Heart left ventricle (tissue), 16 donors: ENCODE measurements at regions of chr12 and their contacts with region 1.

Region 1: GRCh38 chr12:68137335-68137830 is 22.2 kb downstream of the IFNG start:
- DNase-seq: no peak
- ATAC-seq: no peak
- H3K4me3 ChIP-seq: no peak overlapping the region
- H3K27ac ChIP-seq: no peak overlapping the region
- H3K4me1 ChIP-seq: no peaks in the 10 kb centered on the region
- H3K27me3 ChIP-seq: no peaks in the 10 kb centered on the region
- CTCF ChIP-seq: no peak
- POLR2A ChIP-seq: no peak

Region 2: GRCh38 chr12:67804168-67804567 is 333.2 kb before region 1 on chr12:
- intact Hi-C with region 1: no loop called
- DNase-seq: no peak
- ATAC-seq: no peak
- H3K4me3 ChIP-seq: no peak overlapping the region
- H3K27ac ChIP-seq: no peak overlapping the region
- H3K4me1 ChIP-seq: peaks cover 0 to 18% (median 5%) of the 10 kb centered on the region in 12 donors
- H3K27me3 ChIP-seq: no peaks in the 10 kb centered on the region
- CTCF ChIP-seq: no peak
- POLR2A ChIP-seq: no peak

Region 3: GRCh38 chr12:68074306-68075027 is 62.9 kb before region 1 on chr12:
- intact Hi-C with region 1: loop called in 1 of 10 experiments (anchors 10 kb)
- DNase-seq: no peak
- ATAC-seq: no peak
- H3K4me3 ChIP-seq: no peak overlapping the region
- H3K27ac ChIP-seq: no peak overlapping the region
- H3K4me1 ChIP-seq: no peaks in the 10 kb centered on the region
- H3K27me3 ChIP-seq: no peaks in the 10 kb centered on the region
- CTCF ChIP-seq: no peak
- POLR2A ChIP-seq: no peak